ENCODE measurements at regions of chr4 and their contacts with region 1.

Region 1: GRCh38 chr4:98976694-98977310 is 18.7 kb upstream of the METAP1 start:
- DNase-seq: peak; percentile 15 to 60
- H3K4me3 ChIP-seq: no peak overlapping the region
- H3K27ac ChIP-seq: no peak overlapping the region
- H3K4me1 ChIP-seq: no peaks in the 10 kb centered on the region
- H3K27me3 ChIP-seq: no peaks in the 10 kb centered on the region
- CTCF ChIP-seq: no peak

Region 2: GRCh38 chr4:99024481-99025275 is 47.9 kb after region 1 on chr4:
- CTCF ChIA-PET with region 1: no interaction called
- POLR2A ChIA-PET with region 1: no interaction called
- intact Hi-C with region 1: no loop called
- DNase-seq: no peak
- H3K4me3 ChIP-seq: no peak overlapping the region
- H3K27ac ChIP-seq: no peak overlapping the region
- H3K4me1 ChIP-seq: no peaks in the 10 kb centered on the region
- H3K27me3 ChIP-seq: no peaks in the 10 kb centered on the region
- CTCF ChIP-seq: no peak

Region 3: DNA sequence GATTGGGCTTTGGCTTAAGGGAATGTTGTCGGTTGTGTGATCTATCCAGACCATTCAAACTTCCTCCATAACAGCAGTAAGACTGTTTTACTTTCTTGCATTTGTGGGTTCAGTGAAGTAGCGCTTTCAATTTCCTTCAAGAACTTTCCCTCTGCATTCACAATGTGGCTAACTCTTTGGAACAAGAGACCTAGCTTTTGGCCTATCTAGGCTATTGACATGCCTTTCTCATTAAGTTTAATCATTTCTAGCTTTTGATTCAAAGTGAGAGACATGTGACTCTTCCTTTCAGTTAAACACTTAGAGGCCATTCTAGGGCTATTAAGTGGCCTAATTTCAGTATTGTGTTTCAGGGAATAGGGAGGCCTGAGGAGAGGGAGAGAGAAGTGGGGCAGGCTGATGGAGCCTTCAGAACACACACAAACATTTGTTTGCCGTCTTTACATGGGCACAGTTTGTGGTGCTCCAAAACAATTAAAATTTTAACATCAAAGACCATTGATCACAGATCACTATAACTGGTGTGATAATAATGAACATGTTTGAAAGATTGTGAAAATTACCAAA is 77.7 kb after region 1 on chr4:
- CTCF ChIA-PET with region 1: interaction called, 11 read pairs
- POLR2A ChIA-PET with region 1: no interaction called
- intact Hi-C with region 1: no loop called
- DNase-seq: no peak
- H3K4me3 ChIP-seq: no peak overlapping the region
- H3K27ac ChIP-seq: no peak overlapping the region
- H3K4me1 ChIP-seq: peaks cover 9% of the 10 kb centered on the region
- H3K27me3 ChIP-seq: no peaks in the 10 kb centered on the region
- CTCF ChIP-seq: no peak